GM12878 (cell line): ENCODE measurements at regions of chr2 and their contacts with region 1.

Region 1: DNA sequence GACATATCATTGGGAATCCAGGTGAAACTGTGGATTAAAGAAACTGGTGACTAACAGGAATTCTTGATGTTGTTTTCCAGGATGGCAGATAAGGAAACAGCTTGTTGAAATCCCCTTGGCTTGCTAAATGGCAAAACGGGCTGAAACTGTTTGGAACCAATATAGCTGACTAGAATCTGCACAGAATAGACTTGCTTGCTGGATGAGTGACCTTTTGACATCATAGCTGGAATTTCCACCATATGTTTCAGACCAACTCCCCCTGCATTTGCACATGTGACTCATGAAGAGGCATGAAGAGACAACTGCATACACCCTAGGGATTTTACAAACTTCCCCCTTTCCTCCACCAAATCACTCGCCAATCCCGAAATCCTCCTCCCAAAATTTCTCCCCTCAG is 87.7 kb upstream of the LYPD1 start:
- DNase-seq: no peak
- ATAC-seq: peak; percentile 45
- H3K4me3 ChIP-seq: no peak overlapping the region
- H3K27ac ChIP-seq: no peak overlapping the region
- H3K4me1 ChIP-seq: no peaks in the 10 kb centered on the region
- H3K27me3 ChIP-seq: no peaks in the 10 kb centered on the region
- CTCF ChIP-seq: no peak
- EP300 ChIP-seq: no peak
- POLR2A ChIP-seq: no peak
- RAD21 ChIP-seq: no peak

Region 2: DNA sequence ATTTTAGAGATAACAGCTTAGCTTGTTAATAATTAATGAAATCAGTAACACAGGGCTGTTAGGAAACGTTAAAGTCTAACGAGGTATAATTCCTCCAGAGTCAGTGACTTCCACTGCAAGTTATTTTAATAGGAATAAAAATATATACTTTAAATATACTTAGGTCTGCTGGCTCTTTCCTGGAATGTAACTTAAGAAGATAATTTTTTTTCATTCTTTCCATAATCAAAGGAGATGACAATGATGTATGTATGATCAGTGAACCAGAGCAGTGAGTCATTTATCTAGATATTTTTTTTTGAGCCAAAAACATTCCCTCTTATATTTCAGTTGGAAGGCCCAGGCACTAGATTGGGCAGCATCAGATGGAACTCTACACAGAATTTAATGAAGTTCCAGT is 16.5 kb after region 1 on chr2:
- CTCF ChIA-PET with region 1: interaction called, 7 read pairs
- POLR2A ChIA-PET with region 1: interaction called, 4 read pairs
- RAD21 ChIA-PET with region 1: interaction called, 4 read pairs
- SMC1A ChIA-PET with region 1: interaction called, 19 read pairs
- in situ Hi-C with region 1: no loop called
- intact Hi-C with region 1: no loop called
- DNase-seq: no peak
- ATAC-seq: no peak
- H3K4me3 ChIP-seq: no peak overlapping the region
- H3K27ac ChIP-seq: no peak overlapping the region
- H3K4me1 ChIP-seq: no peaks in the 10 kb centered on the region
- H3K27me3 ChIP-seq: no peaks in the 10 kb centered on the region
- CTCF ChIP-seq: no peak
- EP300 ChIP-seq: no peak
- POLR2A ChIP-seq: no peak
- RAD21 ChIP-seq: no peak